WTC11 (cell line): ENCODE measurements at regions of chr7 and their contacts with region 1.

Region 1: GRCh38 chr7:137592232-137592896 is 248.8 kb upstream of the PTN start:
- DNase-seq: peak; percentile 57
- ATAC-seq: peak; percentile 83
- H3K4me3 Mint-ChIP-seq: no peak overlapping the region
- H3K27ac Mint-ChIP-seq: no peak overlapping the region
- H3K4me1 Mint-ChIP-seq: no peaks in the 10 kb centered on the region; the same call in 1 of the 2 replicates
- H3K27me3 Mint-ChIP-seq: no peaks in the 10 kb centered on the region
- CTCF ChIP-seq: peak; percentile 64

Region 2: DNA sequence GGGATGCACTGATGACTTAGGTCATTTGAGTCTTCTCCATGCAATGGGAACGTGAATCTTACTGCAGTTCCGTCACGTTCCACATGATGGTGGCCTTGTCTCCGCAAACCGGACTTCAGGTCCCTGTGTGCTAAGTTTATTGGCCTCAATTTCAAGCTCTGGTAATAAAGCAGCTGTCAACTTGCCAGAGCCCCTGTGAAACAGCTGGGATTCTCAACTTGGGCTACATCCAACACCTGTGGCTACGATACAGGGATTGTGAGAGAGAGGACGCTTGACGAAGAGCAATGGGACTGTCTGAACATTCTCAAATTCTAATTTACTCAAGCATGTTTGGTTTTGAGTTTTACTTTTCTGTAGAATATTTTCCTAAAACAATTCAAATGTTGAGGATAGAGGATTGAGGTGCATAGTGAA is 423.1 kb before region 1 on chr7:
- CTCF ChIA-PET with region 1: interaction called, 46 read pairs
- POLR2A ChIA-PET with region 1: no interaction called
- DNase-seq: peak; percentile 77
- ATAC-seq: peak; percentile 99
- H3K4me3 Mint-ChIP-seq: no peak overlapping the region
- H3K27ac Mint-ChIP-seq: 0 out of 2 replicates have a peak overlapping the region, but pooled peaks have one; percentile 29
- H3K4me1 Mint-ChIP-seq: peaks cover 11% of the 10 kb centered on the region
- H3K27me3 Mint-ChIP-seq: no peaks in the 10 kb centered on the region
- CTCF ChIP-seq: peak; percentile 48; the same call in 1 of the 2 replicates

Region 3: GRCh38 chr7:137337902-137338301 is 254.5 kb before region 1 on chr7:
- CTCF ChIA-PET with region 1: interaction called, 14 read pairs
- POLR2A ChIA-PET with region 1: no interaction called
- DNase-seq: peak; percentile 24
- ATAC-seq: peak; percentile 91
- H3K4me3 Mint-ChIP-seq: no peak overlapping the region
- H3K27ac Mint-ChIP-seq: no peak overlapping the region
- H3K4me1 Mint-ChIP-seq: peaks cover 28% of the 10 kb centered on the region
- H3K27me3 Mint-ChIP-seq: no peaks in the 10 kb centered on the region; the same call in 1 of the 2 replicates
- CTCF ChIP-seq: peak; percentile 31; the same call in 1 of the 2 replicates

Region 4: GRCh38 chr7:137488038-137488437 is 104.3 kb before region 1 on chr7:
- CTCF ChIA-PET with region 1: interaction called, 15 read pairs
- POLR2A ChIA-PET with region 1: no interaction called
- DNase-seq: no peak
- ATAC-seq: no peak
- H3K4me3 Mint-ChIP-seq: no peak overlapping the region
- H3K27ac Mint-ChIP-seq: no peak overlapping the region
- H3K4me1 Mint-ChIP-seq: peaks cover 6% of the 10 kb centered on the region; the same call in 1 of the 2 replicates
- H3K27me3 Mint-ChIP-seq: no peaks in the 10 kb centered on the region
- CTCF ChIP-seq: no peak

Region 5: GRCh38 chr7:137626469-137627067 is 34.2 kb after region 1 on chr7:
- CTCF ChIA-PET with region 1: interaction called, 16 read pairs
- POLR2A ChIA-PET with region 1: no interaction called
- DNase-seq: peak; percentile 75
- ATAC-seq: peak; percentile 93
- H3K4me3 Mint-ChIP-seq: no peak overlapping the region
- H3K27ac Mint-ChIP-seq: no peak overlapping the region
- H3K4me1 Mint-ChIP-seq: no peaks in the 10 kb centered on the region
- H3K27me3 Mint-ChIP-seq: no peaks in the 10 kb centered on the region; the same call in 1 of the 2 replicates
- CTCF ChIP-seq: peak; percentile 81